Common myeloid progenitor, CD34-positive (primary cell): ENCODE measurements at regions of chr2 and their contacts with region 1.

Region 1: GRCh38 chr2:241965931-241966412 is 96.4 kb downstream of the RTP5 start:
- DNase-seq: peak; percentile 39 to 93 (median 84)
- H3K4me3 ChIP-seq: peak overlapping the region in 6 of 7 experiments; percentile 2 to 71 (median 54)
- H3K27ac ChIP-seq: peak overlapping the region; percentile 9 to 66
- H3K4me1 ChIP-seq: peaks cover 0 to 21% (median 14%) of the 10 kb centered on the region in 4 experiments
- H3K27me3 ChIP-seq: no peaks in the 10 kb centered on the region

Region 2: DNA sequence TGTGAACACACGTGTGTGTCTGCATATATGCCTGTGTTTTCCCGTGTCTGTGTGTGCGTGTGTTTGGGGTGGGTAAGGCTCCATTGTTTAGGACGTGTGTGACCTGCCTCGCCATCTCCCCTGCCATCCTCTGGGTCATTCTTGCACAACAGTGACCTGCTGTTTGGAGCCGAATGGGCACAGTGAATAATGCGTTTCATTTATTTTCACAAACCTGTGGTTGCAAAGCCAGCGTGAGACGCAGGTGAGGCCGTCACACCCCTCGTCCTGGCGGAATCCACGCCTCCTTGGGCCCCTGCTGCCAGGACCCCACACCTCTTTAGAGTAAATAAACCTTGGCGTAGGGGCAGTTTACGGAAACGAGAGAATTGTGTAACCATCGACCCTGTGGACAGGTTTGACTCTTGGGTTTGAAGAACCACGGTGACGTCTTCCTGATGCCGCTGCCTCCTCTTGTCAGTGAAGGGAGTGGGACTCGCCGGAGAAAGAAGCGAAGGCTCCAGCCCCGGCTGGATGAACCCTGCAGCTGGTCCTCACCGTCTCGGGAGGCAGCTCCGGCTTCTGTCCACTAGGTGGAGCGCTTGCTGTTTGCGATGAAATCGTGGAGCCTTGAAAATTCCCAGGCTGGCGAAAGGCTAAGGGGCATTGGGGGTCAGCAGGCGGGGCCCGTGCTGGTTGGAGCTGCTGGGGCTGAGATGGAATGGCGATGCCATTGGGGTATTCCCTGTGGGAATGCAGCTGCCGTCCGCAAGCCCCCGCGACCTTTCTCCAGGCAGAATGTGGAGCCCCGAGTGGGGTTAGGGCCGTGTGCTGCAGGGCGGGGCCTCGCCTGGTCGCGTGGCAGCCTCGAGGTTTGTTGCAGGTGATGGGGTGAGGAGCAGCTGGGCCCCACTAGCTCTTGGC is 15.3 kb before region 1 on chr2:
- CTCF ChIA-PET with region 1: interaction called, 10 read pairs
- POLR2A ChIA-PET with region 1: no interaction called
- DNase-seq: peak; percentile 16 to 62 (median 53)
- H3K4me3 ChIP-seq: no peak overlapping the region
- H3K27ac ChIP-seq: no peak overlapping the region
- H3K4me1 ChIP-seq: no peaks in the 10 kb centered on the region
- H3K27me3 ChIP-seq: no peaks in the 10 kb centered on the region

Region 3: DNA sequence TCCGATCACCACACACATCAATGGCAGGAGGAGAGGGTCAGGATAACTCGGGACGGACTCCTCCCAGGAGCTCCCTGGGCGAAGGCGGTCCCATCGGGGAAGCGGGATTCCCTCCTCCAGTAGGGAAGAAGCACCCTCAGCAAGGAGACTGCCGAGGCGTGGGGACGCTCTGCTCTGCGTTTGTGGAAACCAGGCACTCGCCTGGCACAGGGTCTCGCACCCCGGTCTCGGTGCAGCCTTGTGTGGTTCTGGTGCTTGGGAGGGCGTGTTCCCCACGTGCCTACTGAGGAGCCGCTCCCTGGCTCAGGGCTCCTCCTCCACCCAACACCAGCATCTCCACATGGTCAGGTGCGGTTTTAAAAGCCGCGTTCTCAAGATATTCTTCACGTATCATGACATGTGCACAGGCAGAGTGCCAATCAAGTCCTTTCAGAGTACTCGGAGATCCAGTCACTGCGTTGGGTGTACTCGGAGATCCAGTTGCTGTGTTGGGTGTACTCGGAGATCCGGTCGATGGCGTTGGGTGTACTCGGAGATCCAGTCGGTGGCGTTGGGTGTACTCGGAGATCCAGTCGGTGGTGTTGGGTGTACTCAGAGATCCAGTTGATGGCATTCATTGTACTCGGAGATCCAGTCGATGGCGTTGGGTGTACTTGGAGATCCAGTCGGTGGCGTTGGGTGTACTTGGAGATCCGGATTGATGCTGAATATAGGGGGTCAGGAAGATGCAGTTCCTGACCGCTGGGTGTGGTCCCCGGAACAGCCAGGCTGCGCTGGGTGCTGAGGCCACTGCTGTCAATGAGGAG is 21.1 kb after region 1 on chr2:
- CTCF ChIA-PET with region 1: no interaction called
- POLR2A ChIA-PET with region 1: no interaction called
- DNase-seq: no peak
- H3K4me3 ChIP-seq: no peak overlapping the region
- H3K27ac ChIP-seq: no peak overlapping the region
- H3K4me1 ChIP-seq: peaks cover 0 to 3% (median 0%) of the 10 kb centered on the region in 4 experiments
- H3K27me3 ChIP-seq: no peaks in the 10 kb centered on the region